Naive thymus-derived CD4-positive, alpha-beta T cell (primary cell): ENCODE measurements at regions of chr18 and their contacts with region 1.

Region 1: GRCh38 chr18:22348521-22349316 is 69.0 kb downstream of the CTAGE1 start:
- DNase-seq: no peak
- ATAC-seq: no peak
- H3K4me3 ChIP-seq: peak overlapping the region; percentile 49
- H3K4me3 Mint-ChIP-seq: peak overlapping the region; percentile 39 to 84 (median 70)
- H3K27ac ChIP-seq: no peak overlapping the region
- H3K27ac Mint-ChIP-seq: peak overlapping the region in 6 of 9 donors; percentile 7 to 78 (median 64)
- H3K4me1 ChIP-seq: peaks cover 0 to 36% of the 10 kb centered on the region in 2 donors
- H3K4me1 Mint-ChIP-seq: peaks cover 0 to 24% (median 11%) of the 10 kb centered on the region in 7 donors
- H3K27me3 ChIP-seq: peaks cover 0 to 6% of the 10 kb centered on the region in 2 donors
- H3K27me3 Mint-ChIP-seq: peaks cover 38 to 56% (median 48%) of the 10 kb centered on the region in 5 donors

Region 2: GRCh38 chr18:22169007-22169864 is 179.5 kb before region 1 on chr18 and contains the start of gene GATA6:
- CTCF ChIA-PET with region 1: no interaction called
- POLR2A ChIA-PET with region 1: no interaction called
- intact Hi-C with region 1: loop called in 1 of 2 experiments (anchors 5 kb)
- DNase-seq: peak in 1 of 9 donors; percentile 31
- ATAC-seq: peak; percentile 63
- H3K4me3 ChIP-seq: peak within 1 kb of the TSS; percentile 38
- H3K4me3 Mint-ChIP-seq: peak within 1 kb of the TSS; percentile 52 to 87 (median 80)
- H3K27ac ChIP-seq: no peak within 1 kb of the TSS
- H3K27ac Mint-ChIP-seq: peak within 1 kb of the TSS in 1 of 9 donors; percentile 81
- H3K4me1 ChIP-seq: peaks cover 0 to 19% of the 10 kb centered on the region in 2 donors
- H3K4me1 Mint-ChIP-seq: peaks cover 0 to 23% (median 20%) of the 10 kb centered on the region in 7 donors
- H3K27me3 ChIP-seq: peaks cover 16 to 28% of the 10 kb centered on the region in 2 donors
- H3K27me3 Mint-ChIP-seq: peaks cover 60 to 79% (median 65%) of the 10 kb centered on the region in 5 donors
- total RNA-seq, gene GATA6: 0.19 to 0.44 TPM in 2 of 5 experiments, not detected in the others

Region 3: DNA sequence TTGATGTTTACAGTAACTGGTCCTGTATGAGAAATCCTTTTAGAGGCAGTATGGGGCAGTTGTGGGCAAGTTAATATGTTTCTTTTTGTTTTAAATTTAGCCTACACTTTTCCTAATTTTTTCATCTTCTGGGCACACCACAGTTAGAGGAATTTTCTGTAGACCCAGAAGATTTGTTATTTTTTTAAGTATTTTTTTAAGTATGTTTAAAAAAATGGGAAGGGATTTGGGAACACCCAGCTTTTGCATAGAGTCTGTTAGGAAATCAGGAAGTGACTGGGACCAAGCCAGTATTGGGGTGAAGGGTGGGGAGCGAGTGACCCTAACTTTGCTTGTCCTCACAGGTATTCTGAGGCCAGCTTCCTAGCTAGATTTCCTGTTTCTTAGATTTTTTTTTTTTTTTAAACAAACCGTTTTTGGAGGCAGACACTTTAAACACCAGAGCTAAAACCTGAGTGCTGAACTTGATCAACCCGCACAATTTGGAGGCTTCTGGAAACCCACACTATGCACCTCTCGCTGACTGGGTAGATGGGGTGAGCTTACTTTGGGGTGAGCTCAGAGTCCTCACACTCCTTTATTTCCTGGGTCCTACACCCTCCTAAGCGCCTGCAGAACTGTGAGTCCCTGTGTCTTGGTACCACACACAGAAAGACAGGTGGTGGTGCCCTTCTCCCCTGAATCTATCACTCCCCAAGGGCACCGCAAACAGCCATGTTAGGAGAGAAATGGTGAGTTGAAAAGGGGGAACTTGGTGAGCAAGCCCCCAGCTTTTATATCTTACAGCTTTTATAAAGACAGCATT is 174.2 kb before region 1 on chr18:
- CTCF ChIA-PET with region 1: no interaction called
- POLR2A ChIA-PET with region 1: no interaction called
- intact Hi-C with region 1: loop called (anchors 5 kb)
- DNase-seq: no peak
- ATAC-seq: no peak
- H3K4me3 ChIP-seq: no peak overlapping the region
- H3K4me3 Mint-ChIP-seq: no peak overlapping the region
- H3K27ac ChIP-seq: no peak overlapping the region
- H3K27ac Mint-ChIP-seq: no peak overlapping the region
- H3K4me1 ChIP-seq: no peaks in the 10 kb centered on the region
- H3K4me1 Mint-ChIP-seq: peaks cover 0 to 12% (median 7%) of the 10 kb centered on the region in 7 donors
- H3K27me3 ChIP-seq: peaks cover 4 to 7% of the 10 kb centered on the region in 2 donors
- H3K27me3 Mint-ChIP-seq: peaks cover 51 to 72% (median 64%) of the 10 kb centered on the region in 5 donors

Region 4: DNA sequence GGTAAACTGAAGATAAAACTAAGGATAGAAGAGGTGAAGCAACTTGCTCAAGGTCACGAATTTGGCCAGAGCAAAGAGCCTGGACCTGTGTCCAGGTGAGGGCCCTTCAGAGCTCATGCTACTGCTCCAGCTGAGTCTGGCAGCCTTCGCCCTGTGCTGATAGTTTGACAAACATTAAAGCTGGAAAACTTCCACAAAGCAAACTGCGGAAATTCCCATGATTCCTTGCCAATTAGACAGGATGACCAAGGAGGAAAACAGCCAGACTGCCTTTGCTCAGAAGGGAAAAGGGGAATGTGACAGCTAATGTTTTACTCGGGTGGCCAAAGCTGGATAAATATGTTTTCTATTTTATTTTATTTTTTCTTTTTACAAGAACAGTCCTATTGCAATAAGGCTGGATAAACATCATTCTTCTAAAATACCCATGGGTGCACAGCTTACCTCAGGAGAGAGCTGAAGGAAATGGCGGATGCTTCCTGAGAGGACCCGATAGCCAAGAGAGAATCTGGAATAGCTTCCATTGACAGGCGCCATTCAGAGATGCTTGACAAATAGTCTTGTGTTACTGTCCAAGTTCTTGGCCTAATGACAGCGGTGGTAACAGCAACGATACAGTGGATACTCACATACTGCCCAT is 74.3 kb after region 1 on chr18:
- CTCF ChIA-PET with region 1: no interaction called
- POLR2A ChIA-PET with region 1: no interaction called
- intact Hi-C with region 1: no loop called
- DNase-seq: no peak
- ATAC-seq: no peak
- H3K4me3 ChIP-seq: no peak overlapping the region
- H3K4me3 Mint-ChIP-seq: no peak overlapping the region
- H3K27ac ChIP-seq: no peak overlapping the region
- H3K27ac Mint-ChIP-seq: no peak overlapping the region
- H3K4me1 ChIP-seq: no peaks in the 10 kb centered on the region
- H3K4me1 Mint-ChIP-seq: peaks cover 0 to 1% (median 0%) of the 10 kb centered on the region in 7 donors
- H3K27me3 ChIP-seq: no peaks in the 10 kb centered on the region
- H3K27me3 Mint-ChIP-seq: peaks cover 0 to 11% (median 0%) of the 10 kb centered on the region in 5 donors